Activated naive CD4-positive, alpha-beta T cell treated with anti-CD3 and anti-CD28 coated beads for 36 hours (primary cell): ENCODE measurements at regions of chr5 and their contacts with region 1.

Region 1: DNA sequence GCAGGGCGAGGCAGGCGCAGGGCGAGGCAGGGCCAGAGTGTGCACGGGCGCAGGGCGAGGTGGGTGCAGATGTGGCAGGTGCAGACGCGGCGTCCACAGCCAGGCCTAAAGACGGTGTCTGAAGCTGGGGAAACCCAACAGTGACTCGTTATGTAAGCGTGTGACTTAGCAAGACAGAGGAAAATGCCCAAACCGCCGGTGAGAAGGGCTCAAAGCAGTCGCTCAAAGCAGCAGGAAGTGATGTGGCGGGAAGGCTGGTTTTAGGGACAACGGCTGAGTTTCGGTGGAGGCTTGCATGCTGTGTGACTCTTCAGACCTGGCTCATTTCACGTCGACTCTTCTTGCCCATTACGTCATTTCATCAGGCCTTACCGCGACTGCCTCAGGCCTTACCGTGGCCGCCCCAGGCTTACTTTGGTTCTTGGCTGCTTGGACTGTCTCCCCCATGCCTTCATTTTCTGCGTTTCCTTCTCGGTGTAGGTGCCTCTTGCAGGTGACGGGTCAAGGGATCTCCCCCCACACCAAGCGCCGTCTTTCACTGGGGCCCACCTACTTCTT is 50.5 kb upstream of the EXOC3 start:
- DNase-seq: peak; percentile 96
- H3K4me3 Mint-ChIP-seq: peak overlapping the region; percentile 69
- H3K27ac Mint-ChIP-seq: peak overlapping the region; percentile 91
- H3K4me1 Mint-ChIP-seq: peaks cover 27% of the 10 kb centered on the region
- H3K27me3 Mint-ChIP-seq: no peaks in the 10 kb centered on the region

Region 2: DNA sequence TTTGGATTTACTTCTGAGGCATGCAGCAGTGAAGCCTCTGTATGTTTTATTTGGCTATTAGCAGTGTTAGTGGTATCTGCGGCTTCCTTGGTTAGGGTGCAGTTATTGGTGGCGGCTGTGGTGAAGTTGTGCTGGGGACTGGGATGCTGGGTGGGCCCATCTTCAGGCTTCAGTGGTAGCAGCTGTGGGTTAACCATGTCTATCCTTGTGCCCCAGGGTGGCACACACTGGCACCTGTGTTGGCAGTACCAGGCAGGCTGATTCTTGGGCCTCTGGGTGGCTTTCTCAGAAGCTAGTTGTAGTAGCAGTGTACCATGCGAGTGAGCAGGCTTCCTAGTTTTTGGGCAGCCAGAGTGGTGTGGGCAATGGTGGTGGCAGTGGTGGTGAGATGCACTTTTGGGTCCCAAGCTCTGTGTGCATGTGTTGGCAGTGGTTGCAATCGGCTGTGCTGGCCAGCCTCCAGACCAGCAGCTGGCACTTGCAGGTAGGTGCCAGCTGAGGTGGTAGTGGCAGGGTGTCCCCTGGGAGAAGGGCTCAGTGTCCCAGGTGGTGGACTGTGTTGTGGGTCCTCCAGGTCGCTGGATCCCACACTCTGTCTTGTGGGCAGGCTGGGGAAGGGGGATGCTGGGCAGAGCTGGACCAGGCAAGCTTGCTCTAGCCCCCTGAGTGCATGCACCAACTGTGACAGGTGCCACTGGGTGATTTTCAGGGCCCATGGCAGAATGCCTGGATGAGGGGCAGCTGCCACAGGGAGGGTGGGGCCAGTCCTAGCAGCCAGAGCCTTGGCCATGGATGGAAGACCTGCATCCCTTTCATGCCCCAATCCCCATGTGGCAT is 57.4 kb before region 1 on chr5:
- CTCF ChIA-PET with region 1: no interaction called
- intact Hi-C with region 1: loop called (anchors 1 kb)
- DNase-seq: no peak
- H3K4me3 Mint-ChIP-seq: no peak overlapping the region
- H3K27ac Mint-ChIP-seq: no peak overlapping the region
- H3K4me1 Mint-ChIP-seq: peaks cover 27% of the 10 kb centered on the region
- H3K27me3 Mint-ChIP-seq: peaks cover 2% of the 10 kb centered on the region

Region 3: DNA sequence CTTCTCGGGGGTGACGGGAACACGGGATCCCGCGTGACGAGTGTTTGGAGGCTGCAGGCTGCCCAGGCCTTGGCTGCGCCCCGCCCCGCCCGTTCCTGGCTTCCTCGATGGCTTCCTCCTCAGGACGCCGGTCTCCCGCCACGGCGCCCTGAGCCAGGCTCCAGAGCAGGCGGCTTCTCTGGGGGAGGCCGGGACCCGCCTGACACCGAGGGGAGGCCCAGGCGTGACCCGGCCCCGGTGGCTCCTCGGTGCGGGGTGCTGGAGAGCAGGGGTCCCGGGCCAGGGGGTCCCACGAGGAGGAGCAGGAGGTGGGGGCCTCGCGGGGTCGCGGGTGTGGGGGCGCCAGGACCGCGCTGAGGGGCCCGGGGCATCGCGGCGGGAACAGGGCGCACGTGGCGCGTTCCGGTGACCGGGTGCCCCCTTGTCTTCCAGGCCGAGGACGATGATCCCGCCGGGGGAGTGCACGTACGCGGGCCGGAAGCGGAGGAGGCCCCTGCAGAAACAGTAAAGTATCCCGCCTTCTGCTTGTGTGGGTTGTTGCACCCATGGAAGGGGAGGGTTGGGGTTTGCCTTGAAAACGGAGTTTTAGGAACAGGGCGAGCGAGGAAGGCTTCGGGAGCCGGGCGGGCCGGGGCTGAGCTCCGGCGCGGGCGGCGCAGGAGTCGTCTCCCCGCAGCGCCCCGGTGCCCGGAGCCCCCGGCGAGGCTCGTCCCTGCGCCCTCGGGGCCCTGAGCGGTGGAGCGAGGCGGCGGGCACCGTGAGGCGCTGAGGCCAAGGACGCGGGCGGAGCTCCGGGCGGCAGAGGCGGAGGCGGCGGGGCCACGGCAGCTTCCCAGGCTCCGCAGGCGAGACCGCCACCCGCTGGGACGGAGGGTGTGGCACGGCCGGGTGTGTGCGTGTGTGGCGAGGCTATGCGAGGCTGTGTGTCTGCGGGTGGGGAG is 48.8 kb before region 1 on chr5:
- CTCF ChIA-PET with region 1: no interaction called
- intact Hi-C with region 1: loop called (anchors 1 kb)
- DNase-seq: peak; percentile 71
- H3K4me3 Mint-ChIP-seq: peak overlapping the region; percentile 53
- H3K27ac Mint-ChIP-seq: no peak overlapping the region
- H3K4me1 Mint-ChIP-seq: peaks cover 10% of the 10 kb centered on the region
- H3K27me3 Mint-ChIP-seq: peaks cover 11% of the 10 kb centered on the region

Region 4: DNA sequence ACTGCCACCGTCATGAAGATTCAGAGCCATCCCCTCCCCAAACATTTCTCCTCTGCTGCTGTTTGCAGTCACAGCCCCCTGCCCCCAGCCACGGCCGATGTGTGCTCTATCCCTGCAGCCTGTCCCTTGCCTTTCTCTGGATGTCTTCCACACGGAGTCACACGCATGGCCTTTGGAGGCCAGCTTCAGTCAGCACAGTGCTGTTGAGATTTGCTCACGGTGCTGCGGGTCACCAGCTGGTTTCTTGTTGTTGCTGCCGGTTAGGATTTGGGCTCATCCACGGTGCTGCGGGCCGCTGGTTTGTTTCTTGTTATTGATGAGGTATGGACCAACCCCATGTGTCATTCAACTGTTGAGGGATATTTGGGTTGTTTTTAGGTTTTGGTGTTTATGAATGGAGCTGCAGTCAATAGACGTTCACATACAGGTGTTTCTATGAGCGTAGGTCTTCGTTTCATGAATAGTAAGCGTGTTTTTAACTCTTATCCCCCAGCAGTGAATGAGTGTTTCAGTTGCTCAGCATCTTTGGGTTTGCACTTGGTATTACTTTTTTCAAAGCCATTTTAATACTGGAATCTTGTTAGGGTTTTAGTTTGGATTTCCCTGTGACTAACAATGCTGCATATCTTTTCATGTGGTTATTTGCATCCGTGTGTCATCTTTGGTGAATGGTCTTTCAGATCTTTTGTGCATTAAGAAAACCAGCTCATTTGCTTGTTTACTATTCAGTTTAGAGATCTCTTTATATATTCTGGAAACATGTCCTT is 13.4 kb before region 1 on chr5:
- CTCF ChIA-PET with region 1: interaction called, 6 read pairs
- intact Hi-C with region 1: loop called (anchors 1 kb)
- DNase-seq: peak; percentile 15
- H3K4me3 Mint-ChIP-seq: peak overlapping the region; percentile 20
- H3K27ac Mint-ChIP-seq: peak overlapping the region; percentile 92
- H3K4me1 Mint-ChIP-seq: peaks cover 50% of the 10 kb centered on the region
- H3K27me3 Mint-ChIP-seq: peaks cover 7% of the 10 kb centered on the region

Region 5: DNA sequence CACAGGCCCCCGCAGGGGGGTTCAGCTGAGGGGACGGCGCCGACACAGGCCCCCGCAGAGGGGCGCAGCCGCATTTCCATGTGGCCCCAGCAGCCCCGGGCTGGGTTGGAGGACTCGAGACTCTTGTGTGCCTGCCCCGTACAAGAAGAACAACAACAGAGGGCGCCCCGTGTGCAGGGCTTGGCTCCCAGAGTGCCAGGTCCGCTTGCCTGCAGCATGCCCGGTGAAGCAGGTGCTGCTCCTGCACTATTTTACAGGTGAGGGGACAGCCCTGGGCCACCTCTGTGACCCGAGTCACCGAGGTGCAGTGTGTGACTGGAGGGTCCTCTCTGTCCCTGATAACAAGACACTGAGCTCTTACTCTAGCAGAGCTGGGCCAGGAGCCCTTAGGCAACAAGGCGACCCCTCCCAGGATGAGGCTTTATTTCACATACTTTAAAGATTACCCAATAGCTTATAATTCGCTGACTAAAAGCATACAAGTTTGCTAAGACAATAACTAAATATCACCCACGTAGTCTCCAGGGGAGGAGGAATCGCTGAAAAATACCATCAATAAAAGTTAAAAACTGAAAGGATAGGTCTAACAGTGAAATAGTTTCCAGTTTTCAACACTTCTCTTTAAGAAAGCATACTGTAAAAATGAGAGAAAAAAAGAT is 173.4 kb after region 1 on chr5:
- CTCF ChIA-PET with region 1: no interaction called
- intact Hi-C with region 1: no loop called
- DNase-seq: no peak
- H3K4me3 Mint-ChIP-seq: no peak overlapping the region
- H3K27ac Mint-ChIP-seq: no peak overlapping the region
- H3K4me1 Mint-ChIP-seq: no peaks in the 10 kb centered on the region
- H3K27me3 Mint-ChIP-seq: peaks cover 19% of the 10 kb centered on the region

Region 6: DNA sequence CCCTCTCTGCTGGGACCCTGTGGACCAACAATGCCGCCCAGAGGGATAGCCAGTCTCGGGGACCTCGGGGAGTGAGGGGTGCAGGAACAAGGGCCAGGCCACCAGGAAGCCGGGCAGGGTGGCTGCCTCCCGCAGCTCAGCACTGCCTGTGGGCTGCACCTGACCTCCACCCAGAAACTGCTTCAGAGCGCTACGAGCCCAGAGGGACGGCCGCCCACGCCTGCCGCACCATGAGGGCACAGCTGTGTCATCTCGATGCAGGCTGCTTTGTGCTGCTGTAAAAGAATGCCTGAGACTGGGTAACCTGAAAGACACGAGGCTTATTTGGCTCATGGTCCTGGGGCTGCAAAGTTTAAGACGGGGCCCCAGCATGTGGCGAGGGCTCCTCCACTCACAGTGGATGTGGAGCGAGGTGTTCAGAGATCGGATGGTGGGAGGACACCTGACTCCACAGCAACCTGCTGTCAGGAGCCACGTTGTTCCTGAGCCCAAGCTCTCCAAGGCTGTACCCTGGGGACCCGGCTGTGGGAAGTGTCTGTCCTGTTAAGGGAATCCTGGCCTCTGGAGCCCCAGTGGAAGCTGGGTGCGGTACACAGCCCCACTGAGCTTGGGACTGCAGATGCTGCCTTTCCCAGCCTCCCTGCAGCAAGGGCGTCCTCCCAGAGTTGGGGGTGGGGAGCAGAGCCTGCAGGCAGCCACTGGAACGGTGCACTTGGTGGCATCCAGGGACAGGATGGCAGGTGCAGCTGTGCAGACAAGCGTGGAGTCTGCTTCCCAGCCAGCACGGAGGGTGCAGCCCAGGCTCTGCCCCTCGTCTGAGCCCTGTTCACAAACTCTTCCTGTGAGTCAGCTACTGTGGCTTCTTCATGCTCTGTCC is 470.1 kb after region 1 on chr5:
- CTCF ChIA-PET with region 1: no interaction called
- intact Hi-C with region 1: no loop called
- DNase-seq: no peak
- H3K4me3 Mint-ChIP-seq: no peak overlapping the region
- H3K27ac Mint-ChIP-seq: no peak overlapping the region
- H3K4me1 Mint-ChIP-seq: no peaks in the 10 kb centered on the region
- H3K27me3 Mint-ChIP-seq: no peaks in the 10 kb centered on the region